Left ventricle myocardium inferior (tissue), 1 donor: ENCODE measurements at regions of chr4 and their contacts with region 1.

Region 1: GRCh38 chr4:48844843-48845242 is 14.0 kb downstream of the OCIAD1 start:
- DNase-seq: no peak
- H3K4me3 ChIP-seq: no peak overlapping the region
- H3K27ac ChIP-seq: no peak overlapping the region
- H3K4me1 ChIP-seq: peaks cover 6% of the 10 kb centered on the region
- H3K27me3 ChIP-seq: no peaks in the 10 kb centered on the region
- CTCF ChIP-seq: no peak

Region 2: DNA sequence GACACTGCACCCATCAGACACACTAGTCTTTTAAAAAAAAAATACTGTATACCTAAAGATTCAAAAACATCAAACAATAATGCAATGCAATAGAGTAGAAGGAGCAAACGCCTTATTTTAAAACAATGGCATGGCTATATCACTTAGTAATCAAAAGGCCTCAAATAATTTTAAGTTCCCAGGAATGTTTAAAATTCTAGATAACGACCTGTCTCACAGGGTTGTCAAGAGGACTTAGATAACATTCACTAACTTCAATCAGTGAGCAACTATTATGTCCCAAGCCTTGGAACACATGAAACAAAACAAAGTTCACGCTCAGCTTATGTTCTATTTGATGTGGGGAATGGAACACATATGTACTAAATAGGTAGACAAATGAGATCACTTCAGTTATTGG is 171.3 kb before region 1 on chr4:
- intact Hi-C with region 1: loop called (anchors 10 kb)
- DNase-seq: no peak
- H3K4me3 ChIP-seq: no peak overlapping the region
- H3K27ac ChIP-seq: no peak overlapping the region
- H3K4me1 ChIP-seq: peaks cover 8% of the 10 kb centered on the region
- H3K27me3 ChIP-seq: no peaks in the 10 kb centered on the region
- CTCF ChIP-seq: no peak

Region 3: DNA sequence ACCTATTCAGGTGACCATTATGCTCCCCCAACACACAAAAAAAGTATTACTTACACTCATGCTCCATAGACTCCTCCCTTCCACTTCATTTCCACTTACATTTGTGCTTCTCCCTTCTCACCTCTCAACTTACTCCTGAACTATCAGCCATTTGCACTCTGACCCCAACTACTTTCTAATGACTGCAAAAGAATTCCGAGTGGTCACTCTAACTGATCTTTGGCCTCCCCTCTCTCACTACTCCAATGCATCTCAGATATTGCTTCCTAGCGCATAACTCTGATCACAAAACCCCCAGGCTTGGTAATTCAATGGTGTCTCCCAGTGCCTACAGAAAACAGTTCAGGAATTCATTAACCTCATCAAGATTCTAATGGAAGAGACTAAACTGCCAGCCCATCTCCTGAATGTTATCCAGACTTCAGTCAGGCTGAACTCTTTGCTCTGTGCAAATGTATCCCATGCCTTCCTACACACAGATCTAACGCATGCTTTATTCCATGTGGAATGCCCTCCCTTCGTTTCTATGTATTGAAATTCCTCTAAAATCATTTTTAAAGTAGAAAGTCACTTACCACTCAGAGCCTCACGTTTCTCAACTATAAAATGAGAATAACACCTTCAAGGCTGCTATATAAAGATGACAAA is 125.9 kb before region 1 on chr4:
- intact Hi-C with region 1: no loop called
- DNase-seq: no peak
- H3K4me3 ChIP-seq: no peak overlapping the region
- H3K27ac ChIP-seq: no peak overlapping the region
- H3K4me1 ChIP-seq: peaks cover 24% of the 10 kb centered on the region
- H3K27me3 ChIP-seq: no peaks in the 10 kb centered on the region
- CTCF ChIP-seq: no peak